ENCODE measurements at regions of chr1 and their contacts with region 1.

Region 1: DNA sequence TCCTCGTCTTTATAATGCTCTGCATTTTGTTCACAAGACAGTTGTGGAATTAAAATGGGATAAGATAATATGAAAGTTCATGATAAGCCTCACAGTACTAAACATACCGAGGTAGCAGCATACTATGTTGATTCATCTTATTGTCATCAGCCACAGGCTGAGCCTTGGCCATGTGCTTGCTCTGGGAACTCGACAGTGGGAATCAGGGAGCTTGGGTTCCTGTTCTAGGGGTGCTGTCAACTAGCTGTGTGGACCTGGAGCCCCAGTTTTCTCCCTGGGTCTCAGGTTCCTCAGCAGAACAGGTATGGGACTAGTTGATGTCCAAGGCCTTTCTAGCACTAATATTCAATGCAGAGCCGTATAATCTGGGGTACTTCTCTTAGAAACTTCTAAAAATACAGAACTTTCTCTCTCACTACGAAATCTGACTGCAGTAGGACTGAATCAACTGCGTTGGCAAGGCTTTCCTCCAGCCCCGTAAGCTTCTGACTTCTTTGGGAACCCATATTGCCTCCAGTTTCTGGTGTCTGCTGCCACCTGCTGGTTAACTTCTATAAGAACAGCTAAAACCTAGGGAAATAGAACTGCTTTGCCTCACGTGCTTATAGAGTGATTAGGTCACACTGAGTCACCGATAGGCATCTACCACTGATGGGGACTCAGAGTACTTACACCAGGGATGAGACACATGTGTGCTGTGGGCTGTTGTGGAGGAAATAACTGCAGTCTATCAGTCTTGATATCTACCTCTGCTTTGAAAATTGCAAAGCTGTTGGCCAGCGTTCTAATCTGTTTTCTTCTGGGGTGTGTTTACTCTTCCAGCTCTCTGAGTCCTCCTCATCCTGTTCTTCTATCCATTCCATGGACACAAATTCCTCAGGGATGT is 110.9 kb downstream of the RGL1 start:
- H3K4me3 ChIP-seq: no peak overlapping the region
- H3K27ac ChIP-seq: no peak overlapping the region
- H3K4me1 ChIP-seq: no peaks in the 10 kb centered on the region
- CTCF ChIP-seq: peak; percentile 73

Region 2: DNA sequence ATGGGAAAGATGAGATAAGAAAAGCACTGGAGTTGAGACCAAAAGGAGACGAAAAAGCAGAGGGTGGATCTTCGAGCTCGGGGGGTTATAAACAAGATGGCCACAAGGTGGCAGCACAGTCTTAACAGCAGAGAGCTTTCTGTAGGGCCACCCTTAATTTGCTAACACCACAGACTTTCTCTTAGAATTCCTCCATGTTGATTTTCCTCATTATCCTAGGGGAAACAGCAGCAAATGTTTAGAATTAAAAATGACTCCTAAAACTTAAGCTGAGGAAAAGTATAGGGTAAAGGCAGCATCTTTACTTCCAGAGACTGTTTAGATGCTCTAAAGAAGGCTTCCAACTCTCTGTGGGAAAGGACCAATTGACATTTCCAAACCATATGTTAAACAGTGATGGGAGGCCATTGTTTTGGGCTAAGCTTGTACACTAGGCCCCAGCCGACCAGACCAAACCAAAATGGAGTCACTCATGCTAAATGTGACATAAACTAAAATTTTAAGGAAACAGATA is 260.2 kb before region 1 on chr1:
- CTCF ChIA-PET with region 1: interaction called, 128 read pairs
- POLR2A ChIA-PET with region 1: interaction called, 4 read pairs
- H3K4me3 ChIP-seq: no peak overlapping the region
- H3K27ac ChIP-seq: no peak overlapping the region
- H3K4me1 ChIP-seq: no peaks in the 10 kb centered on the region
- CTCF ChIP-seq: peak; percentile 61

Region 3: DNA sequence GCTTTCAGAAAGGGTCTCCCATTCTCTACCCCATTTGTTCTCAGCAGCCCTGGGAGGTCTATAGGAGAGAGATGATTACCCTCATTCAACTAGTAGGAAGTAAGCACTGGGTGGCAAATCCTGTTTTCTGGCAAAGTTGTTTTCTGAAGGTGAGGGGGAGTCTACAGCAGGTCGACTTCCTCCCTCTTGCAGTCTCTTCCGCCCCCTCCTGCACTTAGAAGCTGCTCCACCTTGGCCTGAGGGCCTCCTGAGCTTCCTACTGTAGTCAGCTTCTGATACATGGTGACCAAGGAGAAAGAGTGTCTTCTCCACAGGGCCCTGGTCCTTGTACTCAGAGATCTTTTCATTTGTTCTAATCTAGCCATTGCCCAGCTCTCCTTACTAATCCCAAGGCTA is 17.9 kb before region 1 on chr1:
- CTCF ChIA-PET with region 1: interaction called, 12 read pairs
- POLR2A ChIA-PET with region 1: no interaction called
- H3K4me3 ChIP-seq: no peak overlapping the region
- H3K27ac ChIP-seq: no peak overlapping the region
- H3K4me1 ChIP-seq: no peaks in the 10 kb centered on the region
- CTCF ChIP-seq: no peak

Region 4: GRCh38 chr1:183926983-183927382 is 11.1 kb after region 1 on chr1:
- CTCF ChIA-PET with region 1: interaction called, 15 read pairs
- POLR2A ChIA-PET with region 1: no interaction called
- H3K4me3 ChIP-seq: no peak overlapping the region
- H3K27ac ChIP-seq: no peak overlapping the region
- H3K4me1 ChIP-seq: no peaks in the 10 kb centered on the region
- CTCF ChIP-seq: no peak

Region 5: GRCh38 chr1:184002071-184002470 is 86.2 kb after region 1 on chr1:
- CTCF ChIA-PET with region 1: no interaction called
- POLR2A ChIA-PET with region 1: no interaction called
- H3K4me3 ChIP-seq: no peak overlapping the region
- H3K27ac ChIP-seq: no peak overlapping the region
- H3K4me1 ChIP-seq: no peaks in the 10 kb centered on the region
- CTCF ChIP-seq: no peak